ENCODE measurements at regions of chr15 and their contacts with region 1.

Region 1: GRCh38 chr15:75201609-75202250 is at the start of gene C15orf39:
- DNase-seq: peak; percentile 63
- ATAC-seq: peak; percentile 65
- H3K4me3 ChIP-seq: peak within 1 kb of the TSS; percentile 95
- H3K27ac ChIP-seq: peak within 1 kb of the TSS; percentile 82
- H3K4me1 ChIP-seq: peaks cover 33% of the 10 kb centered on the region
- H3K27me3 ChIP-seq: no peaks in the 10 kb centered on the region
- CTCF ChIP-seq: peak; percentile 75
- total RNA-seq, gene C15orf39: 23.8 and 31.0 TPM in 2 replicates

Region 2: DNA sequence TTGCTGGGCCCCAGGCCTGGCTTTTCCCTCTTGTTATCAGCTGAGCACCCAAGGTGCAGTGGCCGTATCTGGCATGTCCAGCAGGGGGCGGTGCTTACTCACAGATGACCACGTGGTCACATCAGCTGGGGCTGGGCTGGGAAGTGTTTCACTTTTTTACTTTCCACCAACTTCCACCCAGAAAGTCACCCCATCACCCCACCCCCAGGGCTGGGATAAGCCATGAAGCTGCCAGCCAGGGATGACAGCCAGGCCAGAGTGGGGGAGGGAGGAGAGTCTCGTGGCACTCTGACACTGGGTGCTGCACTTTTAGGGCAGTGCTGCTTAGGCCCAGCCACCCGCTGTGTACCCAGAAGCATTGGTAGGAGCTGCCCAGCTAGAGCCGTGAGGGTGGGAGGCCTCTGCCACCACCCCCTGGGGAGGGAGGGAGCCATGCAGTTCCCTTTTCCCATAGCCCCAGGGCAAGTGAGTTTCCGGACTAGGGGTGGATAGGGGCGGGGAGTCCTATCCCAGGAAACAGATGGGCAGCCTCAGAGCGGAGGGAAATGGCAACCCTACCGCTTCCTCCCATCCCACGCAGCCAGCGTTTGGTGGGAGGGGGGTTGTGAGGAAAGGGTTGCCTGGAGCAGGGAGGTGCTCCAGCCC is 172.2 kb before region 1 on chr15:
- CTCF ChIA-PET with region 1: interaction called, 7 read pairs
- POLR2A ChIA-PET with region 1: no interaction called
- intact Hi-C with region 1: loop called (anchors 1 kb)
- DNase-seq: peak; percentile 89
- ATAC-seq: peak; percentile 88
- H3K4me3 ChIP-seq: no peak overlapping the region
- H3K27ac ChIP-seq: peak overlapping the region; percentile 43; the same call in 1 of the 2 replicates
- H3K4me1 ChIP-seq: peaks cover 28% of the 10 kb centered on the region
- H3K27me3 ChIP-seq: no peaks in the 10 kb centered on the region
- CTCF ChIP-seq: peak; percentile 92

Region 3: DNA sequence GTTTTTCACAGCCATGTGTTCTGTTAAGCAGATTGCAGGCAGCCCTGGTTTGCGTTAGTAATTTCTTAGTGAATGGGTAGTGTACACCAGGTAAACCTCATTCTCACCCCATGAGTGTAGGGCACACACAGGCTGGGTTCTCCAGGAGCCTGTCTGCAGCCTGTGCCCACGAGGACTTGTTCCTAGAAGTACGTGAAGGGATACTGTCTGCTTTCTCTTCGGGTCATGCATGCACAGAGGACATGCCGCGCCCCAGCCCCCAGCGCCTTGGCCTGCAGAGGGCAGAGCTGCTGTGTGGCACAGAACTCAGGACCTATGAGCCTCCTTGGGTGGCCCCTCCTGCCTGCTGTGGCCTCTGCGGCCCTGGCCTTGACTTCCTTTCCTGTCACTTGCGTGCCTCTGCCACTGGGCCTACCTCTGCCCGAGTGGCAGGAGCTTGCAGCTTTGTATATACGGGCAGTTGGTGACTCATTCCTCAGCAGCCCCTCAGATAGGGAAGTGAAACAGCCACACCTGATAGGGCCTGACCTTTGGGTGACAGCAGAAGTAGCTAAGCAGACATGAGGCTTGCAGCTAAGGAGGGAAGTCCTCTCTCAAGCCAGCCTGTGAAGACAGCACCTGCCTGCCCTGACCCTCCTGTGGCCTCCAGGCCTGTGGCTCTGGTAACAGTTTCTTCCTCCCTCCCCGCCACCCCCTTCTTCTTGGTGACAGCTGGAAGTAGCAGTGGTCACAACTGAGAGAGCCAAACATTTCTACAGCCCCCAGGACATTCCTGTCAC is 158.8 kb before region 1 on chr15:
- CTCF ChIA-PET with region 1: interaction called, 6 read pairs
- POLR2A ChIA-PET with region 1: no interaction called
- intact Hi-C with region 1: loop called (anchors 2 kb)
- DNase-seq: peak; percentile 59
- ATAC-seq: peak; percentile 73
- H3K4me3 ChIP-seq: no peak overlapping the region
- H3K27ac ChIP-seq: peak overlapping the region; percentile 52
- H3K4me1 ChIP-seq: peaks cover 25% of the 10 kb centered on the region
- H3K27me3 ChIP-seq: no peaks in the 10 kb centered on the region
- CTCF ChIP-seq: peak; percentile 58

Region 4: DNA sequence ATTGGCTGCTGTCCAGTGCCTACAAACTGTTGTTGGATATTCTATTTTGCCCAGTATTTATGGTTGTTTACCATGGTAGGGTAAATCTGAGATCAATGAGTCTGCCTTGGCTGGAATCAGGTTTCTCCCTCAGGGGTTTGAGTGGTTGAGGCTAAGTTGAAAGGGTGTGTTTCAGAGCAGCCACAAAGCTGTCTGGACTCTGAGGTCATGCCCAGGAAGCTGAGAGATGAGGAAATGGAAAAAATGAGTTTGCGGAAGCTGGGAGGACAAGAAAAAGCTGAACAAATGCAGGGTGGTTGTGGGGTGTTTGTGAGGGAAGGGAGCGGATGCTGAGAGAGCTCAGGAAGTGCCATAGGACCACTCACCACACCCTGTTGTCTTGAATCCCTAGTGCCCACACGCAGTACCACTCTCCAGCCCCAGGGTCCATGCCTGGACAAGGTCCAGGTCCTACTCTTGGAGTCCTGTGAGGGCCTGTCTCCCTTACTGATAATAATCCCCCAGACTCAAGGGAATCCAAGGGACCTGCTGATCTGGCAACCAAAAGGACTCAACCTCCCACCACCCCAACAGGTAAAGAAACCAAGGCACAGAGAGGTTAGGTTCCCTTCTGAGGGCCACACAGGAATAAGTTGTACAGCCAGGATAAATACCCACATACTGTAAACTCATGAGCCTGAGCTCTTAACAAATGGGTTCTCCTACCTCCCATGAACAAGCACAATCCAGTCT is 96.8 kb before region 1 on chr15:
- CTCF ChIA-PET with region 1: no interaction called
- POLR2A ChIA-PET with region 1: no interaction called
- intact Hi-C with region 1: loop called (anchors 5 kb)
- DNase-seq: peak; percentile 99
- ATAC-seq: peak; percentile 88
- H3K4me3 ChIP-seq: no peak overlapping the region
- H3K27ac ChIP-seq: peak overlapping the region; percentile 92
- H3K4me1 ChIP-seq: peaks cover 44% of the 10 kb centered on the region
- H3K27me3 ChIP-seq: no peaks in the 10 kb centered on the region
- CTCF ChIP-seq: no peak

Region 5: DNA sequence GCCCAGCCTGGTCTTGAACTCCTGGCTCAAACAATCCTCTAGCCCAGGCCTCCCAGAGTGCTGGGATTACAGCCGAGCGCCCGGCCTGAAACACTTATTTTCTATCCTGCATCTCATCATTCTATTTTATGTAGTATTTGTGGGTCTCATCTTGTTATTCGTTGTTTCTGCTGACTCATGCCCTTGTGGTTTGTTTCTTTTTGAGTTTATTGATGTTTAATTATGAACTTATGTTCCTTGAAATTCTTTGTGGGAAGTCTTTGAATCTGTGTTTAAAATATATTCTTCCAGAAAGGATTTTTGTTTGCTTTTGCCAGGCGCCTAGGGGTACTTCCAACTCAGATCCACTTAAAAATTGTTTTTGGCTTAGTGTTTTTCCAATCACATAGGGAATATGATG is 78.3 kb before region 1 on chr15:
- CTCF ChIA-PET with region 1: no interaction called
- POLR2A ChIA-PET with region 1: interaction called, 4 read pairs
- intact Hi-C with region 1: loop called (anchors 5 kb)
- DNase-seq: peak; percentile 83
- ATAC-seq: peak; percentile 72
- H3K4me3 ChIP-seq: no peak overlapping the region
- H3K27ac ChIP-seq: peak overlapping the region; percentile 85
- H3K4me1 ChIP-seq: peaks cover 37% of the 10 kb centered on the region
- H3K27me3 ChIP-seq: no peaks in the 10 kb centered on the region
- CTCF ChIP-seq: no peak

Region 6: DNA sequence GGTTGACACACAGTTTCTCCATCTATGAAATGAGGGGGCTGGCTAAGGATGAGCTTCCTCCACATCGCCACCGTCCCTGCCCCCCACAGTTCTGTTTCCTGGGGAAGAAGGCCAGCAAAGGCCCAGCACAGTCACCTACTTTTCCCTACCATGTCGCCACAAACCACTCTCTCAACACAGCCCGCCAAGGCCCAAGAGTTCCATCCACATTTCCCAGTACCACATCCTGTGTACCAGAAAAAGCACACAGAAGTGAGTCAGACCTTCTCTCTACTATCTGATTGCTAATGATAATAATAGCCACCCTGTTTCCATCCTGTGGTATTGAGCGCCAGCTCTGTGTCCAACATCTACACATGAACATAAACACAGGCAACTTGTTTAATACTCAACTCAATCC is 30.3 kb before region 1 on chr15:
- CTCF ChIA-PET with region 1: interaction called, 4 read pairs
- POLR2A ChIA-PET with region 1: interaction called, 3 read pairs
- intact Hi-C with region 1: loop called (anchors 2 kb)
- DNase-seq: peak; percentile 93
- ATAC-seq: peak; percentile 91
- H3K4me3 ChIP-seq: peak overlapping the region; percentile 27; the same call in 1 of the 2 replicates
- H3K27ac ChIP-seq: peak overlapping the region; percentile 95
- H3K4me1 ChIP-seq: peaks cover 65% of the 10 kb centered on the region
- H3K27me3 ChIP-seq: no peaks in the 10 kb centered on the region
- CTCF ChIP-seq: no peak

Region 7: DNA sequence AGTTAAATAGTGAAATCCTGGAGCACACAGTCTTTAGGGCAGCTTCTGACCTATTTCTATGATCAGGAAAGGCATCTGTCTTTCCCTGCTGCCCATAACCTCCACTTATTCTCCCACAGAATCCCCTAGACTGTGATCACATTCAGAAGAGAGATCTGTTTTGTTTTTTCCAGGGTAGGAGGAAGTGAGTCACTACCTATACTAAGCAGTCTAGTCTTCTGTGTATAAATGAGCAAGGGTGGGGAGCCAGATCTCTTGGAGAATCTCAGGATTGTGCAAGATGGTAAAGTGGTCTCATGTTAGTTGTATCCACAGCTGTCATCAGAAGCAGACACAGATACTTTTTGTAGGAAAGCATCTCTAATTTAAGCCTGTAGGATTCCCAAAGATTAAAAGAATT is 690.2 kb after region 1 on chr15:
- CTCF ChIA-PET with region 1: no interaction called
- POLR2A ChIA-PET with region 1: no interaction called
- intact Hi-C with region 1: no loop called
- DNase-seq: peak; percentile 52
- ATAC-seq: peak; percentile 89
- H3K4me3 ChIP-seq: no peak overlapping the region
- H3K27ac ChIP-seq: peak overlapping the region; percentile 8
- H3K4me1 ChIP-seq: peaks cover 11% of the 10 kb centered on the region
- H3K27me3 ChIP-seq: no peaks in the 10 kb centered on the region
- CTCF ChIP-seq: no peak

Measured in PC-3 (cell line).